ENCODE measurements at regions of chr7 and their contacts with region 1.

Region 1: DNA sequence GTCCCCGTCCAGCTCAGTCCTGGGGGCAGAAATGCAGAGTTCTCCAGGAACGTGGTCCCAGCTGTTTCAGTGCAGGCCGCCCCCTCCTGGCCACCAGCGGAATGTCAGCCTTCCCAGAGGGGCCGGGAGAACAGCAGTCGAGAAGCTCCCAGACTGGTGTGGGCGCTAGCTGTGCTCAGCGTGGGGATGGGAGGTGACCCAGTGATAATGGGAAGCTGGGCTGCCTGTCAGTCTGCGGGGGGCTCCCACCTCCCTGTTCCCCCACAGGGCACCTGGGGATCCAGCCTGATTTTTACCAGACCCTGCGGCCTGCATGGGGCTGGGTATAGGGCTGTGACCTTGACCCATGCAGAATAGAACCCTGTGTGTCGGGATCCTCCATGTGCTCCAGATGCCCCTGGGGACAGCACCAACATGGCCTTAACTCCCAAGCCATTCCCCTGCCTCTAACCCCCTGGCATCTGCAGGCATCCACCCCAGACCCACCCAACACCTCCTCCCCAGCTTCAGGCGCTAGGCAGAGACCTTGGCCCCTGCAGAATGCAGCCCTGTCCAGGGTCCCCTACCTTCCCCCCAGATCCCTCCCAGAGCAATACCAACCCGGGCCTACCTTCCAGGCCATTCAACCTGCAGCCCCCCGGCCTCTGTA is 946 bp upstream of the ELN start:
- DNase-seq: peak; percentile 95

Region 2: DNA sequence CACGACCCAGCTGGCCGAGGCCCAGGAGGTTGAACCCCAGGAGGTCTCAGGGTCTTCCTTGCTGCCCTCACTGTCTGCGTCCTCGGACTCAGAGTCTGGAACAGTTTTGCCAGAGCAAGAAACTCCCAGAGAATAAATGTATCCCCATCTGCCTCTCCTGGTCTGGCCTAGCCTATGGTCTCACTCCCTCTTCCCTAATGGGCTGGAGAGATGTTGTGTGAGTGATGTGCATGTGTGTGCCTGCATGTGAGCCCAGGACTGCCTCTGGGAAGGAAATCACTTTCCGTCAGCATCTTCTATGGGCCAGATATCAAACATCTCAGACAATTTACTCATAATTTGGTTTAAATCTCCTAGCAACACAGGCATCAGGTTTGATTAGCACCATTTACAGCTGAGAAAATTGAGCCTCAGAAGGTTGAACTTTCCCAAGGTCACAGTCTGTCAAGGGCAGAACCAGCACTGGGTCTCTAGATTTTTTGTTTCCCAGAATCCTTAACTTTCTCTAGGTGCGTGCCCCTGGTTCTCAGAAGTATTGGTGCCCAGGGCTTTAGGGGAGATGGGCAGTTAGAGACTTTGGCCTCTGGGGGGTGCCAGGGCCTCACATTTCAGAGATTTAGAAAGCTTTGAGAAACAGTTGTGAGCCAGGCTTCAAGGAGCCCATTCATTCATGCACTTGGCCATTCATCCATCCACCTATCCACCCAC is 161.1 kb before region 1 on chr7:
- intact Hi-C with region 1: loop called (anchors 5 kb)
- DNase-seq: no peak

Region 3: DNA sequence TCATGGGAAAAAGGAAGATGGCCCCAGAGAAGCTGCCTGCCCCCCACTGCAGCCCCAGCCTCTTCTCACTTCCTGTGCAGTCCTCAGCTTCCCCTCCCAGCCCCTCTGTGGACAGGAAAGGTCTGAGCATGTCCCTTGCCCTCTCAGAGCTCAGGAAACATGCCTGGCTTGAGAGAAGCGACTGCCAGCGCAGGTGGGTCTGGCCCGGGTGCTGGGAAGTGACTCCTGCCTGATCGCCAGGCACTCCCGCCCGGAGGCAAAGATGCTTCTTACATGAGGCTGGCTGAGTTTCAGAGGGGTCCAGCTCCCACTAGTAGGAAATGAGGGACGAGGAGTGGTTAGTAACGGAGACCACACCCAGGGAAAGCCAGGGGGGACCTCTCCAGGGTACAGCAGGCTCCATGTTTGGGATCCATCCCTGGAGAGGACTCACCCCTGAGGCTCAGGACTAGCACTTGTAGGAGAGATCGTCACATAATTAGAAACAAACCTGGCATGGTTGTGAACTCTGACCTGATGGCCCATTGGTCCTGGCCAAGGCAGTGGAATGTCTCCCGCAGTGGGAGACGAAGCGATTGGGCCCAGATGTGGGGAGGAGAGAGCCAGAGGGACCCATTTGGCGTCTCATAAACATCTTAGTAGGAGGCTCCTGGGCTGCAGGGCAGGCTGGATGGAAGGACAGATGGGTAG is 13.2 kb after region 1 on chr7:
- intact Hi-C with region 1: loop called in 1 of 2 experiments (anchors 1 kb)
- DNase-seq: peak; percentile 58